ENCODE measurements at regions of chr2 and their contacts with region 1.

Region 1: GRCh38 chr2:187453078-187453641 is 5.1 kb upstream of the CALCRL start:
- DNase-seq: no peak
- ATAC-seq: no peak
- H3K4me3 ChIP-seq: no peak overlapping the region
- H3K27ac ChIP-seq: no peak overlapping the region
- H3K4me1 ChIP-seq: no peaks in the 10 kb centered on the region
- H3K27me3 ChIP-seq: no peaks in the 10 kb centered on the region
- CTCF ChIP-seq: peak in 8 of 9 donors; percentile 30 to 75 (median 56)

Region 2: GRCh38 chr2:186862869-186863709 is 590.1 kb before region 1 on chr2:
- intact Hi-C with region 1: loop called (anchors 1 to 10 kb)
- DNase-seq: no peak
- ATAC-seq: peak in 6 of 8 donors; percentile 44 to 75 (median 60)
- H3K4me3 ChIP-seq: no peak overlapping the region
- H3K27ac ChIP-seq: peak overlapping the region in 2 of 10 donors; percentile 22 to 59
- H3K4me1 ChIP-seq: peaks cover 0 to 13% (median 5%) of the 10 kb centered on the region in 9 donors
- H3K27me3 ChIP-seq: no peaks in the 10 kb centered on the region
- CTCF ChIP-seq: peak; percentile 64 to 90 (median 72)

Region 3: DNA sequence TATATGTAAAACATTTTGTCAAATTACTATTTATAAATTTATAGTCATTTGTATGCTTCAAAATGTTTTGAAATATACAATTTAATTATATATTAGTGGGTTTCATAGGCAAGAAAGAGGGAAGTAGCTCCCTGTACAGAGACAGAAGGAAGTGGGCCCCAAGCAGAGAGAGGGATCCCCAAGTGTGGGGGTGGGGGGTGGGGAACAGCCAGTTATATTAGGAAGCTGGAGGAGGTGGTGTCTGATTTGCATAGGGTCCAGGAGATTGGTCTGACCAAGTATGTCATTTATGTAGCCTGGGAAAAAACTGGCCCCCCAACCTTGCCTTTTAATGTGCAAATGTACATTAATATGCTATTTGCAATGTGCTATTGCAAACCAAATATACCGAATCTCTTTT is 527.6 kb before region 1 on chr2:
- intact Hi-C with region 1: no loop called
- DNase-seq: no peak
- ATAC-seq: no peak
- H3K4me3 ChIP-seq: no peak overlapping the region
- H3K27ac ChIP-seq: no peak overlapping the region
- H3K4me1 ChIP-seq: no peaks in the 10 kb centered on the region
- H3K27me3 ChIP-seq: no peaks in the 10 kb centered on the region
- CTCF ChIP-seq: no peak

Region 4: DNA sequence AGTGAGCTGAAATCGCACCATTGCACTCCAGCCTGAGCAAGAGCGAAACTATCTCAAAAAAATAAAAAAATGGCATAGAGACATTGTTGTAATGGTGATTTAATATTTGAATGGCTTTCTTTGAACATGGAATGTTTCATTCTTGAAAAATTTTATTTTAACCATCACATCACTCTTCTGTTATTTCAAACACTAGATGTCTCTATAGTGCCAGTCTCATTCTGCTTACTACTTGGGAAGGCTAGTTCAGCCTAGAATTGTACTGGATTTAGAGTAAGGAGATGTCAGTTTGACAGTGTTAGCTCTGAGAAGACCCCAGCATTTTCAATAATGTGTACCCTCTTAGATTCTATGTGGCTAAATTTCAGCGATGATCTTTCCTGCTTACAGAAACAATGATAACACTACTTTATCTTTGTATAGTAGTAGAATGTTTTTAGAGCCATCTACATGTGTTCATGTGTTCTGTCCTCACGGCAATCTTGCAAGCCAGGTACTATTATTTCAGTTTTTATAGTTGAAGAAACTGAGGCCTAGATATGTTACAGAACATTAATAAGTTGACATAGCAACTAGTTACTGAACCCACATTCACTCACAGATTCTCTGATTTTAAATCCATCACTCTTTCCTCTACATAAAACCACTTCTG is 461.3 kb before region 1 on chr2:
- intact Hi-C with region 1: loop called in 2 of 10 experiments (anchors 5 kb)
- DNase-seq: no peak
- ATAC-seq: peak in 5 of 8 donors; percentile 51 to 80 (median 67)
- H3K4me3 ChIP-seq: no peak overlapping the region
- H3K27ac ChIP-seq: no peak overlapping the region
- H3K4me1 ChIP-seq: peaks cover 0 to 10% (median 0%) of the 10 kb centered on the region in 9 donors
- H3K27me3 ChIP-seq: no peaks in the 10 kb centered on the region
- CTCF ChIP-seq: peak in 6 of 9 donors; percentile 10 to 54 (median 26)

Region 5: DNA sequence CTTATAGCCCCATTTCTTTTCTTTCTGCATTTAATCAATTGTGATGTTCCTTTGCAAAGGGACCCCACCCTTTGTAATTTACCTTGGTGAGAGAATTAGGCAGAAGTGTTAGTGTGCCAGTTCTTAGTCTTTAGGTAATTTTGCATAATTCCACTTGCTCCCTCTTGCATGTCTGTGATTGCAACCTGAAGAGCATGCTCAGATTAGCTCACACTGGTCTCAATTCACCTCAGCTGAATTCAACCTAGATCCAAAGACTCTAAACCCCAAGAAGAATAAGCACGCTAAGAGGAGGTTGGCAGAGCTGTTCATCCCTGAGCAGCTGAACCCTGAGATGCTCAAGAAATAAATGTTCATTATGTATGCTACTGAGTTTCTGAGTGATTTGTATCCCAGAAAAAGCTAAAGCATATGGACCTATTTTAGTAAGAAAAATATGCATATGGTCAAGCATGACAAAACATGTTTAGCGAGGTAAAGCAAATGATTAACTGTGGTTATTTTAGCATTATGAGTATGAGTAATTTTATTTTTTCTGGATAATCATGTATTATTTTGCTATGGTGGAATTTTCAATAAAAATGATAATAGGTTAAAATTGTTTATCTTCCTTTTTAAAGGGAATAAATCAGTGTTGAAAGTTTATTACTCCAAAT is 305.0 kb before region 1 on chr2:
- intact Hi-C with region 1: loop called in 1 of 10 experiments (anchors 10 kb)
- DNase-seq: no peak
- ATAC-seq: no peak
- H3K4me3 ChIP-seq: no peak overlapping the region
- H3K27ac ChIP-seq: no peak overlapping the region
- H3K4me1 ChIP-seq: no peaks in the 10 kb centered on the region
- H3K27me3 ChIP-seq: no peaks in the 10 kb centered on the region
- CTCF ChIP-seq: no peak

Region 6: DNA sequence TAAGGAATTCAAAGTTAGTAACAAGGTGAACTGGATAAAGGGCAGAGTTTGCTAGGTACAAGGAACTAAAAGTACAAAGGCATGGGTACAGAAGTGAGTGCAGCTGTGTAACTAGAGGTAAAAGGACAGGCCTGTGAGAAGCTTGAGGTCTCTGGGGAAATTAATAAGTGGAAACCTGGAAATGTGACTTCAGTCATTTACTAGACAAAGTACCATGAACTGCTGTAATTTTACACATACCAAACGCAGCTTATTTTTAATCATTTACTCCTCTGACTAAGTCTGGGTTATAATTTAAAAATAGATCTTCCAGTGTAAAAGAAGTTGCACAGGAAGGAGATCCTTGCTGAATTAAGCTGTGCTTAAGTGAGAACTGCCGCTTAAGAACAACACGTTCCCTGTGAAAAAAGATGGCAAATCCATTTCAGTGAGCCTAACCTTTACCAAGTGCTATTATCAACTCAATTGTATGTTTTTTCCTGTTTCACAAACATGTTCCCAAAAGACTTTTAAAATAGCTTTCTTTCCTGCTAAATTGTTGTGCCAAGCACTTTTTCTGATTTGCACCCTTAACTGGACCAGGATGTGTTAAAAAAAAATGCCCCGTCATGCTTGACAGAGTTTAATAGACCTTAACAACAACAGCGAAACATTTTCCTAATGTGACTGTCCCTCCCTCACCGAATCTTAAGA is 49.4 kb before region 1 on chr2:
- intact Hi-C with region 1: loop called in 3 of 10 experiments (anchors 2 to 5 kb)
- DNase-seq: peak in 1 of 2 donors; percentile 29
- ATAC-seq: peak; percentile 75 to 92 (median 88)
- H3K4me3 ChIP-seq: peak overlapping the region in 6 of 10 donors; percentile 12 to 40 (median 32)
- H3K27ac ChIP-seq: peak overlapping the region; percentile 22 to 71 (median 62)
- H3K4me1 ChIP-seq: peaks cover 0 to 81% (median 21%) of the 10 kb centered on the region in 9 donors
- H3K27me3 ChIP-seq: no peaks in the 10 kb centered on the region
- CTCF ChIP-seq: no peak

Region 7: DNA sequence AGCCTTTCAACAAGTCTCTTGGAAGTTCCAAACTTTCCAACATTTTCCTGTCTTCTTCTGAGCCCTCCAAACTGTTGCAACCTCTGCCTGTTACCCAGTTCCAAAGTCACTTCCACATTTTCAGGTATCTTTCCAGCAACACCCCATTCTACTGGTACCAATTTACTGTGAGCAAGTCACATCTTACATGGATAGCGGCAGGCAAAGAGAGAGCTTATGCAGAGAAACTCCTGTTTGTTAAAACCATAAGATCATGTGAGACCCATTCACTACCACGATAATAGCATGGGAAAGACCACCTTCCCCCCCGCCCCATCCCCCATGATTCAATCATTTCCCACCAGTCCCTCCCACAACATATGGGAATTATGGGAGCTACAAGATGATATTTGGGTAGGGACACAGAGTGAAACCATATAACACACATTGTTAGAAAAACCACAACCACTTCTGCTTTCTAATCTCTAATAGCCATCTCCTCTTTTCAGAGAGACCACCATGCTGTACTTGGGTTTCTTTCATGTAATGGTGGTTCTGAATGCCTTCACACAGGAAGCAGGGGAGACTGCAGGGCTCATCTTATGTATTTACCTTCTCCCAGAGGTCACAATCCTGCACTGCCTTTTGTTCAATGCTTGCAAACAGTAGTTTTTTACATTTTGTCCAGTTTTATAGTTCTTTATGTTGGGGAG is 40.9 kb after region 1 on chr2:
- intact Hi-C with region 1: no loop called
- DNase-seq: no peak
- ATAC-seq: no peak
- H3K4me3 ChIP-seq: no peak overlapping the region
- H3K27ac ChIP-seq: no peak overlapping the region
- H3K4me1 ChIP-seq: peaks cover 0 to 6% (median 0%) of the 10 kb centered on the region in 9 donors
- H3K27me3 ChIP-seq: no peaks in the 10 kb centered on the region
- CTCF ChIP-seq: no peak